H1 (cell line): ENCODE measurements at regions of chr19 and their contacts with region 1.

Region 1: DNA sequence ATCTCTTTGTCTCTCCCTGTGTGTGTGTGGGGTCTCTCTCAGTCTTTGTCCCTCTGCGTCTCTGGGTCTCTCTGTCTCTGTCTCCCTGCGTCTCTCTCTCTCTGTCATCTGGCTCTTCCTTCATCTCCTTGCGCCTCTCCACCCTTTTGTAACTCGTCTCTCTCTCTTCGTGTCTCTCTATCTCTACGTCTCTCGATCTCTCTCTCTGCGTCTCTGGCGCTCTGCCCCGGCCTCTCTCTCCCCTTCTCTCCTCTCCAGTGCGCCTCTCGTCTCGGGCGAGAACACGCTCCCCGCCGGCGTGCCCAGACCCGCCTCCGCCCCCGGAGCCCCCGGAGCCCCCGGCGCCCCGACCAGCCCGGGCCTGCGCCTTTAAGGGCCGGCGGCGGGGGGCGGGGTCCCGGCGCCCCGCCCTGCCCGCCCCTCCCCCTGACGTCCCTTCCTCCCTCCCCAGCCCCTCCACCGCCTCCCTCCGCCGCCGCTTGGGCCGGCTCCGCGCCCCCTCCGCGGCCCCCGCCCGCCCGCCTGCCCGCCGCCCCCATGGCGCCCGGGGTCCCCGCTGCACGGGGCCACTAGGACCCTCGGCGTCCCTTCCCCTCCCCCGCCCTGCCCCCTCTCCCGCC is at the start of gene MARK4:
- DNase-seq: peak in 1 of 2 experiments; percentile 83
- H3K4me3 ChIP-seq: peak within 1 kb of the TSS; percentile 60 to 86 (median 66)
- H3K27ac ChIP-seq: no peak within 1 kb of the TSS
- H3K4me1 ChIP-seq: peaks cover 0 to 10% (median 0%) of the 10 kb centered on the region in 4 experiments; a peak in 2 of 7 replicates
- H3K27me3 ChIP-seq: peaks cover 0 to 10% (median 9%) of the 10 kb centered on the region in 4 experiments; a peak in 5 of 7 replicates
- CTCF ChIP-seq: no peak
- EP300 ChIP-seq: no peak
- POLR2A ChIP-seq: no peak
- RAD21 ChIP-seq: no peak
- total RNA-seq, gene MARK4: 46.8 and 49.8 TPM in 2 replicates

Region 2: GRCh38 chr19:45187421-45188100 is 63.4 kb before region 1 on chr19:
- CTCF ChIA-PET with region 1: interaction called, 10 read pairs
- POLR2A ChIA-PET with region 1: no interaction called
- DNase-seq: peak in 1 of 2 experiments; percentile 61
- H3K4me3 ChIP-seq: no peak overlapping the region
- H3K27ac ChIP-seq: no peak overlapping the region
- H3K4me1 ChIP-seq: peaks cover 0 to 3% (median 2%) of the 10 kb centered on the region in 4 experiments; a peak in 3 of 7 replicates
- H3K27me3 ChIP-seq: no peaks in the 10 kb centered on the region; a peak in 1 of 7 replicates
- CTCF ChIP-seq: peak in 2 of 3 experiments; percentile 71 to 74; a peak in 3 of 4 replicates
- EP300 ChIP-seq: no peak
- POLR2A ChIP-seq: no peak
- RAD21 ChIP-seq: peak; percentile 65 to 75

Region 3: DNA sequence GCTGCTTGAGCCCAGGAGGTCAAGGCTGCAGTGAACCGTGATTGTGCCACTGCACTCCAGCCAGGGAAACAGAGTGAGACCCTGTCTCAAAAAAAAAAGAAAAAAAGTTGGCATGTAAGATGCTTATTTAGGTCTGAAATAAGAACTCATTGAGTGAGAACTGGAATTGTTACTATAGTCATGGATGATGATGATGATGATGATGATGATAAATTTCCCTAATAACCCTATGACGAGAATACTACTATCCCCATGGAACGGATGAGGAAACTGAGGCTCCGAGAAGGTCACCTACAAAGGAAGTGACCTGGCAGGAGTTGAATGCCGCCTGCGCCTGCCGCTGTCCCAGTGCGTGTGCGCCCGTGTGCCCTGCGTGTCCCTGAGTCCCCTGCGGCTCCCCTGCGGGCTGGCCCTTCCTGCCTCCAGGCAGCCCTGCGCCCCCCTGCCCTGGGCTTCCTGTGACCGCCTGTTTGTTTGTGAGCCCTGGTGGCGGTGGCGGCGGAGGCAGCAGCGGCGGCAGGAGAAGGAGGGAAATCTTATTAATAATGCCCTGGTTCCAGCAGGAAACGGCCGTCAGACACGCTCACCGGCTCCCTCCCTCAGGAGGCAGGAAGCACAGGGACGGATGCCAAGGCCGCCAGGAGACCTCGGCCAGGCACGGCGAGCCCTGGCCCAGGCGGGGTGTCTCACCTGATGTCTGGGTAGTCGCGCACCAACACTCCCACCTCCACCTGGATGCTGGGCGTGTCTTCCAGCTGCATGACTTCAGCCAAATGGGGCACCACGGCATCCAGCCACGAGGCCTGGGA is 35.4 kb before region 1 on chr19:
- CTCF ChIA-PET with region 1: interaction called, 17 read pairs
- POLR2A ChIA-PET with region 1: interaction called, 6 read pairs
- DNase-seq: peak in 1 of 2 experiments; percentile 72
- H3K4me3 ChIP-seq: peak overlapping the region; percentile 15 to 63 (median 40); a peak in 7 of 8 replicates
- H3K27ac ChIP-seq: no peak overlapping the region
- H3K4me1 ChIP-seq: peaks cover 0 to 16% (median 10%) of the 10 kb centered on the region in 4 experiments; a peak in 5 of 7 replicates
- H3K27me3 ChIP-seq: peaks cover 14 to 44% (median 36%) of the 10 kb centered on the region in 4 experiments
- CTCF ChIP-seq: no peak
- EP300 ChIP-seq: no peak
- POLR2A ChIP-seq: no peak
- RAD21 ChIP-seq: no peak

Region 4: DNA sequence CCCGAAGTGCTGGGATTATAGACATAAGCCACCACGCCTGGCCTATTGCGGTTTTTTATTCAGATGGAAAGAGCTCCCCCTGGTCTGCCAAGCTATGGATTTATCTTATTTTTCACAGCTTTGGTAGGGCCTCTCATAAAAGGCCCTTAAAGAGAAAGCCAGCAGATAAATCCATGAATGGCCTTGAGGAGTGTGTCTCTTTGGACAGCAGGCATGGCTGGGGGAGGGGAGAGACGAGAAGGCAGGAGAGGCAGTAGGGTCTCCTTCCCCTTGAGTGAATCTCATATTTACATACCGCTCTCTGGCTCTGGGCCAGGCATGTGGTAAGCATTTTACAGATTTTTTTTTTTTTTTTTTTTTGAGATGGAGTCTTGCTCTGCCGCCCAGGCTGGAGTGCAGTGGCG is 25.3 kb after region 1 on chr19:
- CTCF ChIA-PET with region 1: no interaction called
- POLR2A ChIA-PET with region 1: no interaction called
- DNase-seq: no peak
- H3K4me3 ChIP-seq: no peak overlapping the region
- H3K27ac ChIP-seq: no peak overlapping the region
- H3K4me1 ChIP-seq: no peaks in the 10 kb centered on the region
- H3K27me3 ChIP-seq: no peaks in the 10 kb centered on the region
- CTCF ChIP-seq: no peak
- EP300 ChIP-seq: no peak
- POLR2A ChIP-seq: no peak
- RAD21 ChIP-seq: no peak

Region 5: DNA sequence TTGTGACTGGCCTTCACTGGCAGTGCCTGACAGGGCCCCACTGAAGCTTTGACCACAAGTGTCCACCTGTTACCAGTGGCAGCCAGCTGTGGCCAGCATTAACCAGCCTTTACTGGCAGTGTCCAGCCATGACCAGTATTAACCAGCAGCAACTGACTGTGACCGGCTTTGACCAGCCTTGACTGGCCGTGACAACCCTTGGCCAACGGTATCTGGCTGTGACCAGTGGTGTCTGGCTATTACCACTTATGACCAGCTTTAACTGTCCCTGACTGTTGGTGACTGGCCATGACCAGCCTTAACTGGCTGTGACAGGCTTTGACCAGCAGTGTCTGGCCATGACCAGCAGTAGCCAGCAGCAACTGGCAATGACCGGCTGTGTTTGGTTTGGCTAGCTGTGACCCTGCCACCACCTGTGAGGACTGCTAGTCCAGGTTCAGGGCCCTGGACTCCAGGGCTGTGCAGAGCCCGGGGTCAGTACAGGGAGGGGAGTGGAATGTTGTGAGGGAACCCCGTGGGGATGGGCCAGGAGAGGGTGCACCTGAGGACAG is 39.5 kb after region 1 on chr19:
- CTCF ChIA-PET with region 1: no interaction called
- POLR2A ChIA-PET with region 1: no interaction called
- DNase-seq: no peak
- H3K4me3 ChIP-seq: no peak overlapping the region
- H3K27ac ChIP-seq: no peak overlapping the region
- H3K4me1 ChIP-seq: no peaks in the 10 kb centered on the region
- H3K27me3 ChIP-seq: no peaks in the 10 kb centered on the region; a peak in 1 of 7 replicates
- CTCF ChIP-seq: no peak
- EP300 ChIP-seq: no peak
- POLR2A ChIP-seq: no peak
- RAD21 ChIP-seq: no peak